ENCODE measurements at regions of chr3 and their contacts with region 1.

Region 1: GRCh38 chr3:85180-85579 is 111.4 kb upstream of the CHL1 start:
- DNase-seq: no peak

Region 2: GRCh38 chr3:99506-99905 is 14.3 kb after region 1 on chr3:
- intact Hi-C with region 1: loop called in 1 of 2 experiments (anchors 1 kb)
- DNase-seq: no peak

Region 3: GRCh38 chr3:124557-125179 is 39.5 kb after region 1 on chr3:
- intact Hi-C with region 1: no loop called
- DNase-seq: no peak

Region 4: DNA sequence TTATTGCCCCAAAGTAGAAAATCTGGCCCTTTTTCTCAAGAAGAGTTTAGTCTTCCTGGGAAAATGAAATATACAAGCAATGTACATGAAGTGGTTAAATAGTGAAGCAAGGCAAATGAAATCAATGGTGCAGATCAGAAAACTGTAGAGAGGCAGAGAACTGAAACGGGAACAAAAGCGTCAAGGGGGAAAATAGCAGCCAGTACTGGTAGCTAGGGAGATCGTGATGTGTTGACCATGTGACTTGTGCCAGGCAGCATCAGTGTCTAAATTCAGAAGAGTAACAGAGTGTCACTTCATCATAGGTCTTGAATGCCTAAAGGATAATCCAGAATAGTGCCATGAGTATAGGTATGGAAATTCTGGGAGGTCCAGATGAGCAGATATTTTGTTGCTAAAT is 274.5 kb after region 1 on chr3:
- intact Hi-C with region 1: no loop called
- DNase-seq: no peak

Measured in posterior vena cava (tissue), 2 donors.